MCF 10A (cell line): ENCODE measurements at regions of chr10 and their contacts with region 1.

Region 1: DNA sequence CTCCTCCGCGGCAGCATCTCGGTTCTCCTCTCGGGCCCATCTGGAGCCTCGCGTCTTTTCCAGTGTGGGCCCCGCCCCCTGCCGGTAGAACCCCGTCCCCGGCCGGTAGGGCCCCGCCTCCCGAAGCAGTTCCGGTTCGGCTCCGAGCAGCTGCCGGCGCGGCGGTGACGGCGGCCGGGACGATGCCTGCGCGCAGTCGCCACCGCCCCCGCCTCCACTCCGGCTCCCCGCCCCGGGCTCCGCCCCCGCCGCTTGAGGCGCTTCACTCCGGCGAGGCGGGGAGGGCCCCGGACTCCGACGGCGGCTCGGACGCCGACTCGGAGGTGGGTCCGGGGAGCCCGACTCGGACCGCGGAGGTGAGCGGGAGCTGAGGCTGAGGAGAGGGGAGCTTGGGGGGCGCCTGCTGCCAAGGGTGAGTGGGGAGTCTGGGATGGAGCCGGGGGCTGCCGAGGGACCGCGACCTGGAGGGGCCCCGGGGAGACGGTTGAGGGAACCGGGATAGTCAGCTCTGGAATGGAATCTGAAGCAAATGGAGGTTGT is at the start of gene SAMD8:
- DNase-seq: peak; percentile 95
- H3K4me3 Mint-ChIP-seq: peak within 1 kb of the TSS; percentile 95
- H3K27ac Mint-ChIP-seq: peak within 1 kb of the TSS; percentile 95
- H3K4me1 Mint-ChIP-seq: peaks cover 23% of the 10 kb centered on the region
- H3K27me3 Mint-ChIP-seq: no peaks in the 10 kb centered on the region
- CTCF ChIP-seq: no peak
- total RNA-seq, gene SAMD8: 28.1 and 33.9 TPM in 2 replicates

Region 2: GRCh38 chr10:74967911-74968645 is 143.4 kb before region 1 on chr10:
- CTCF ChIA-PET with region 1: no interaction called
- POLR2A ChIA-PET with region 1: no interaction called
- intact Hi-C with region 1: no loop called
- DNase-seq: peak; percentile 49
- H3K4me3 Mint-ChIP-seq: no peak overlapping the region
- H3K27ac Mint-ChIP-seq: no peak overlapping the region
- H3K4me1 Mint-ChIP-seq: peaks cover 14% of the 10 kb centered on the region
- H3K27me3 Mint-ChIP-seq: no peaks in the 10 kb centered on the region
- CTCF ChIP-seq: no peak

Region 3: GRCh38 chr10:75137533-75138438 is 26.3 kb after region 1 on chr10:
- CTCF ChIA-PET with region 1: no interaction called
- POLR2A ChIA-PET with region 1: interaction called, 15 read pairs
- intact Hi-C with region 1: no loop called
- DNase-seq: no peak
- H3K4me3 Mint-ChIP-seq: no peak overlapping the region
- H3K27ac Mint-ChIP-seq: peak overlapping the region; percentile 16
- H3K4me1 Mint-ChIP-seq: peaks cover 18% of the 10 kb centered on the region
- H3K27me3 Mint-ChIP-seq: no peaks in the 10 kb centered on the region
- CTCF ChIP-seq: no peak

Region 4: GRCh38 chr10:75143353-75143752 is 31.9 kb after region 1 on chr10:
- CTCF ChIA-PET with region 1: no interaction called
- POLR2A ChIA-PET with region 1: interaction called, 15 read pairs
- intact Hi-C with region 1: no loop called
- DNase-seq: peak; percentile 28
- H3K4me3 Mint-ChIP-seq: peak overlapping the region; percentile 71
- H3K27ac Mint-ChIP-seq: peak overlapping the region; percentile 93
- H3K4me1 Mint-ChIP-seq: peaks cover 36% of the 10 kb centered on the region
- H3K27me3 Mint-ChIP-seq: no peaks in the 10 kb centered on the region
- CTCF ChIP-seq: no peak

Region 5: DNA sequence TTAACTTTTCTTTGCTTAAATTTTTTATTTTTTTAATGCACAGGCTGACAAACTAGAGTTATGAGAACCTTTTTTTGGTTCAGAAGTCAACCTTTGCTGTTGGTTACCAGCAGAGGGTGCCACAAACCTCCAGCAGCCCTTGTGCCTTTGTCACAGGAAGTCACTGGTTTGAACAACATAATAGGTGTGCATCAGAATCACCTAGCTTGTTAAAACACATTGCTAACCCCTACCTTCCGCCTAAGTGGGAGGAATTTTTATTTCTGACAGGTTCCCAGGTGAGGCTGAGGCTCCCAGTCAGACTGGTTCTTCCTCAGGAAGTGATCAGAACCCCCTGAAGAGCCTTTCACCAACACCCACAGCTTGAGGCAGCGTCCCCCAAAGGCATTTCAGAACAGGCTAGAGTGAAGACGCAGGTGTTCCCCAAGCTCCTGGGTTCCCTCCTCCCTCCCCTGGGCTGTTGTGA is 76.6 kb after region 1 on chr10:
- CTCF ChIA-PET with region 1: interaction called, 6 read pairs
- POLR2A ChIA-PET with region 1: interaction called, 19 read pairs
- intact Hi-C with region 1: loop called (anchors 5 kb)
- DNase-seq: peak; percentile 78
- H3K4me3 Mint-ChIP-seq: no peak overlapping the region
- H3K27ac Mint-ChIP-seq: no peak overlapping the region
- H3K4me1 Mint-ChIP-seq: peaks cover 22% of the 10 kb centered on the region
- H3K27me3 Mint-ChIP-seq: no peaks in the 10 kb centered on the region
- CTCF ChIP-seq: peak; percentile 83